Activated naive CD4-positive, alpha-beta T cell treated with anti-CD3 and anti-CD28 coated beads for 36 hours (primary cell): ENCODE measurements at regions of chr16 and their contacts with region 1.

Region 1: GRCh38 chr16:25155553-25156460 is 44.3 kb downstream of the LCMT1 start:
- DNase-seq: peak; percentile 85
- H3K4me3 Mint-ChIP-seq: no peak overlapping the region
- H3K27ac Mint-ChIP-seq: peak overlapping the region; percentile 82
- H3K4me1 Mint-ChIP-seq: peaks cover 19% of the 10 kb centered on the region
- H3K27me3 Mint-ChIP-seq: no peaks in the 10 kb centered on the region

Region 2: GRCh38 chr16:24189941-24190340 is 965.9 kb before region 1 on chr16:
- CTCF ChIA-PET with region 1: no interaction called
- intact Hi-C with region 1: loop called (anchors 2 kb)
- DNase-seq: peak; percentile 13
- H3K4me3 Mint-ChIP-seq: no peak overlapping the region
- H3K27ac Mint-ChIP-seq: peak overlapping the region; percentile 46
- H3K4me1 Mint-ChIP-seq: peaks cover 23% of the 10 kb centered on the region
- H3K27me3 Mint-ChIP-seq: no peaks in the 10 kb centered on the region

Region 3: GRCh38 chr16:25031441-25032307 is 124.1 kb before region 1 on chr16:
- CTCF ChIA-PET with region 1: no interaction called
- intact Hi-C with region 1: loop called (anchors 1 kb)
- DNase-seq: peak; percentile 96
- H3K4me3 Mint-ChIP-seq: peak overlapping the region; percentile 83
- H3K27ac Mint-ChIP-seq: peak overlapping the region; percentile 98
- H3K4me1 Mint-ChIP-seq: peaks cover 52% of the 10 kb centered on the region
- H3K27me3 Mint-ChIP-seq: no peaks in the 10 kb centered on the region

Region 4: DNA sequence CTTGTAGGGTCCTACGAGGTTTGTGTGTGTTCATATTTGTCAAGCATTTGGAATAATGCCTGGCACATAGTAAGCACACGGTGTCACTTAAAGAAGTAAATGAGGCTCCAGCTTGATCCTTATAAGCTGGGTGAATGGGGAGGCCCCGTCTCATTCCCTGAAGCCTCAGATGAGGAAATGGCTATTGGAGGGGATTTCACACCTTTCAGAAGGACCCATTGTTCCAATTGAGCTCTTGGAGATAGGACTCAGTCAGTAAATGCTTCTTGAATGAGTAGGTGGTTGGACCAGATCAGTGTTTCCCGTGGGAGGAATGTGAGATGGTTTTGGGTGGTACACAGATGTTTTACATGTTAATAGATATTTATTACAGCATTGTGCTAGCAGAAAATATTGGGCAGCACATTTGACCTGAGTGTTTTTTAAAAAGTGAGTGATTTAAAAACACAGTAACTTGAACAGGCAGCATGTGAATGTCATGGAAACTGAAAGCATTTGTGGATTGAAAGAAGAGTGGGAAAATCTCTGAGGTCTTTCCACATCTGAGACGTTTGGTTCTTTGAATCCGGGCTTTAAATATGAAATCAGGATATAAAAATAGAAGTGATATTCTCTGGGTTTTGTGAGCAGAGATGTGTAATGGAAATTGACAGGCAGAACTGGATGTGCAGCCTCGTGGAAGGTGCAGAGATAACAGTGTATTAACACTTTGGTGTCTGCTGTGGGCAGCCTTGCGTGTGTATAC is 104.2 kb before region 1 on chr16:
- CTCF ChIA-PET with region 1: no interaction called
- intact Hi-C with region 1: loop called (anchors 1 kb)
- DNase-seq: peak; percentile 39
- H3K4me3 Mint-ChIP-seq: peak overlapping the region; percentile 53
- H3K27ac Mint-ChIP-seq: peak overlapping the region; percentile 74
- H3K4me1 Mint-ChIP-seq: peaks cover 66% of the 10 kb centered on the region
- H3K27me3 Mint-ChIP-seq: no peaks in the 10 kb centered on the region

Region 5: DNA sequence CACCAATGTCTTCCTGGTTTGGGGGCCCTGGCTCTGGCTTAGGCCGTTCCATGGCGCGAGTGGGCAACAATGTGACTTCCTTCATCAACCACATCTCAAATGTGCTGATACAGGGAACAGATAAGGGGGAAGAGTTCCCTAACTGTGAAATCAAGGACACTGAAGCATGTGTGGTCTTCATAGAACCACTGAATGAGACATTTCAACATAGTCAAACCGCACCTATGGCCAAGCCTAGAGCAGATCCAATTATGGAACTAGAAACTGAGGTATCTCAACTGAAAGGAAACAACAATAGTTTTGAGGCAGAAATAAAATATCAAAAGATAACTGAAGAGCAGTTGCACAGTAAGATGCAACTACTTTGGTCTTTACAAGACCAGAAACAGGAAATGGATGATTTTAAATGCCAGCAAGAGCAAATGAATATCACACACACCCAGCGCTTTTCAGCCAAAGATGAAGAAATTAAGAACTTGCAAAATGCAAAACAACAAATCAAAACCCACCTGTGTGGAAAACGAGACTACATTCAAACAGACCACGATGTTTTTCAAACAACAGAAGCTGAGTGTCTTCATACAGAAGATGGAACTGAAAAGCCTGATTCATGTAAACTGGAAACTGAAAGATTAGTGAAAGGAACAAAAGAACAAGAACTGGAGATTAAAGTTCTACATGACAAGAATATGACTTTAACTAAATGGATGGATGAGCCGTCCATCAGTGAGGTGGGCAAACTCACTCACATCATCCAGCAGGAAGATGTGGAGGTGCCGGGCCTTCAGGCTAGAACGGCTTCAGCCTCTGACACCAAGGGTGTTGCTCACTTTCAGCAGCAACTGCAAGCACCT is 62.4 kb before region 1 on chr16:
- CTCF ChIA-PET with region 1: no interaction called
- intact Hi-C with region 1: loop called (anchors 1 kb)
- DNase-seq: peak; percentile 49
- H3K4me3 Mint-ChIP-seq: peak overlapping the region; percentile 53
- H3K27ac Mint-ChIP-seq: peak overlapping the region; percentile 78
- H3K4me1 Mint-ChIP-seq: peaks cover 37% of the 10 kb centered on the region
- H3K27me3 Mint-ChIP-seq: no peaks in the 10 kb centered on the region

Region 6: DNA sequence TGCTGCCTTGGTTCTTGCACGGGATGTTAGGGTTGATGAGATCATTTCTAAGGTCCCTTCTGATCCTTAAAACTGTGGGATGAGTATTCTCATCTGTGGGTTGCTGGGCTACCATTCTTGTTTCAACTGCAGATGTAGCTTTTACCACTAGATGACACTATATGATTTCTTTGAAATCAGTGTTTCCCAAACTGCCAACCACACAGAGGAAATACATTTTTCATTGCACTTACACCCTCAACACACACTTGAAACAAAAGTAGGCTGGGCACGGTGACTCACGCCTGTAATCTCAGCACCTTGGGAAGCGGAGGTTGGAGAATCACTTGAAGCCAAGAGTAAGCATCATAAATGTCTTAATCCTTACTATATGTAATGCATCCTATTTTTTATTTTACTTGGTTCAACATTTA is 29.0 kb before region 1 on chr16:
- CTCF ChIA-PET with region 1: no interaction called
- intact Hi-C with region 1: loop called (anchors 1 kb)
- DNase-seq: peak; percentile 73
- H3K4me3 Mint-ChIP-seq: no peak overlapping the region
- H3K27ac Mint-ChIP-seq: no peak overlapping the region
- H3K4me1 Mint-ChIP-seq: peaks cover 36% of the 10 kb centered on the region
- H3K27me3 Mint-ChIP-seq: no peaks in the 10 kb centered on the region